GM18951 (cell line): ENCODE measurements at regions of chr3 and their contacts with region 1.

Region 1: GRCh38 chr3:196988241-196989029 is 19.8 kb upstream of the PIGZ start:
- POLR2A ChIP-seq: no peak

Region 2: DNA sequence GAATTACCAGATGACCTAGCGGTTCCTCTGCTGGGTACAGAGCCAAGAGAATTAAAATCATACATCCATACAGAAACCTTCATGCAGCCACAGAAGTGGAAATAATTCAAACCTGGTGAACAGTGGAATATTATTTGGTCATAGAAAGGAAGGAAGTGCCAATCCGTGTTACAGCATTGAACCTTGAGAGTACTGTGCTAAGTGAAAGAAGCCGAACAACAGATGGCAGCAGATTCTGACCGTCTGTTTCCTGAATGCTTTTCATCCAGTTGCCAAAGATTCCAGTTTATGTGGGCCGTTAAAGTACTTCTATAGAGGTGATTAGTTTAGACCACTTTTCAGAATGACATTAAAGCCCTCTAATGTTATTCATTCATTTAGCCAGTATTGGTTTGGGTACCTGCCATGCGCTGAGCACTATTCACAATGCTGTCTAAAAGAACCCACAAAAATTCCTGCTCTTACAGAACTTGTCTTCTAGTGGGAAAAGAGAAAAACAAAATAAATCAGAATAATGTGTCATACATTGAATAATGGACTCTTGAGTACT is 166.6 kb before region 1 on chr3:
- in situ Hi-C with region 1: no loop called
- POLR2A ChIP-seq: no peak

Region 3: GRCh38 chr3:197186887-197187588 is 198.6 kb after region 1 on chr3:
- in situ Hi-C with region 1: loop called (anchors 25 kb)
- POLR2A ChIP-seq: no peak

Region 4: GRCh38 chr3:197501879-197502620 is 513.6 kb after region 1 on chr3:
- in situ Hi-C with region 1: loop called (anchors 25 kb)
- POLR2A ChIP-seq: no peak